Posterior vena cava (tissue), 2 donors: ENCODE measurements at regions of chr4 and their contacts with region 1.

Region 1: DNA sequence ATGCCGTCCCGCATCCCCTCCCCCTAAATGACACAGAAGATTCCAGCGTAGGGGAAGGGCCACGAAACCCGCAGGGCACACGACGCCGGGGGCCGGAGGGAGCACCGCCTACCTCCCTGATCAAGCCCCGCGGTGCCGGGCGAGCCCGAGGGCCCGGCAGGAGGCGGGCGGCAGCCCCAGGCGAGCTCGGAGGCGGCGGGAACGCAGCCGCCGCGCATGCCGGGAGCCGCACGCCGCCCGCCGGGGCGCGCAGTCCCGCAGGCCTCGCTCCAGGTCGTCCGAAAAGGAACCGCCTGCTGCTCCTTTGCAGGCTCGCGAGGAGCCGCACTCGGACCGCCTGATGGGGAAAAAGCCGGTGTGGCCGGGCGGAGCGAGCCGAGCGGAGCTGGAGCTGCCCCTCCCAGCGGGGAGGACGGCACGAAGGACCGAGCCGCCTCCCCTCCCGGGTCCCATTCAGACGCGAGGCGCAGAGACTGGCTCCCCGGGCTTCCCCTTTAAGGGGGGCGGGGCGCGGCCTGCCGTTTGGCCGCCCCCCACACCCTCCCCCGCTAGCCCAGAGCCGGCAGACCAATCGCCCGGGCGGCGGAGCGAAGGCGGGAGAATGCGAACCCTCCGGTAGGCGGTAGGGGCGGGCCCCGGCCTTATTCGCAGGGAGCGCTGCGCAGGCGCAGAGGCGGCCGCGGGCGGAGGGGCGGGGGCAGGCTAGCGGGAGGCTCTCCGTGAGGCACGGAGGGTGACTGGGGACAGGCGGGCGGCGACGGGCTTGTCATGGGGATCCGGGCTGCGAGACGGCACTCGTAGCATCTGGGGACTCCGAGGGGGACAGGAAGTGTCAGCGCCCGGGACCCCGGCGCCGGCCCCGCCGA is 561 bp upstream of the ING2 start:
- DNase-seq: peak; percentile 100

Region 2: GRCh38 chr4:183444214-183445066 is 59.9 kb before region 1 on chr4 and contains the start of gene CDKN2AIP:
- intact Hi-C with region 1: loop called in 1 of 2 experiments (anchors 10 kb)
- DNase-seq: peak; percentile 98
- total RNA-seq, gene CDKN2AIP: 10.8 to 11.0 TPM

Region 3: GRCh38 chr4:183522821-183523220 is 18.5 kb after region 1 on chr4:
- intact Hi-C with region 1: no loop called
- DNase-seq: no peak

Region 4: DNA sequence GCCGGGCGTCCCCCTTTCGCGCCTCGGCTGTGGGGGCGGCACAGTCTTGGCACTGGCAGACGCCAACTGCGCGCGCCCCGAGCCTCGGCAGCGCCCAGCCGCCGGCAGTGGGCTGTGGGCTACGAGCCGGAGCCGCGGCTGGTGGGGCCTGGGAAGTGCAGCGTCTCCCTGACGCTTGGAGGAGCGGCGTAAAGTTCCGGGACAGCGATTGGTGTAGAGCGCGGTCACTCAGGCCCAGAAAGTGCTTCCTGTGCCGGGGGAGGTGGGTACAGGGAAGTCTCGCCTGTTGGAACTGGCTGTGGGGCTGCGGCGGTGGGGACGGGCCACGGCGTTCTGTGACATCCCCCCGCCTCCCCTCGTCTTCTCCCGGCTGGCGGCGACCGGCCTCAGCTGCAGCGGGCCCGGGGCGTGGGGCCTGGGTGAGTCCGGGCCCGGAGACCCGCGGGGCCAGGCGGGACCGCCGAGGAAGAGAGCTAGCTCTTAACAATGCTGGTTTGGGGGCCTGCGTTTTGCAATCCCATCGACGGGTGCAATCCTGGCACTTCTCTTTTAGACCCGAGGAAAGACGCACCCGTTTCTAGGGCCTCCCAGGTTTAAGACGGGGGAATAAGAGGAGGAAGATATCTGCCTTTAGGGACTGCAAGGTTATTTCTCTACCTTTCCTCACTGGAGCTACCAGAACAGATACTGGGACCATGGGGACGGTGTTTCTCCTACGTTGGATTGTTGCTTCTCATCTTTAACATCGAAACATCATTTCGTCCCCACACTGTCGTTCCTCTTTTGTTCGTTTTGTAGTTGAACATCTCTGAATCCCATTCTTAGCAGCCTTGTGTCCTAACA is 155.0 kb after region 1 on chr4 and contains the starts of genes RWDD4 and TRAPPC11:
- intact Hi-C with region 1: loop called in 1 of 2 experiments (anchors 5 kb)
- DNase-seq: peak; percentile 100
- total RNA-seq, gene RWDD4: 16.8 to 18.2 TPM
- total RNA-seq, gene TRAPPC11: 35.1 to 36.7 TPM